ENCODE measurements at regions of chr1 and their contacts with region 1.

Region 1: DNA sequence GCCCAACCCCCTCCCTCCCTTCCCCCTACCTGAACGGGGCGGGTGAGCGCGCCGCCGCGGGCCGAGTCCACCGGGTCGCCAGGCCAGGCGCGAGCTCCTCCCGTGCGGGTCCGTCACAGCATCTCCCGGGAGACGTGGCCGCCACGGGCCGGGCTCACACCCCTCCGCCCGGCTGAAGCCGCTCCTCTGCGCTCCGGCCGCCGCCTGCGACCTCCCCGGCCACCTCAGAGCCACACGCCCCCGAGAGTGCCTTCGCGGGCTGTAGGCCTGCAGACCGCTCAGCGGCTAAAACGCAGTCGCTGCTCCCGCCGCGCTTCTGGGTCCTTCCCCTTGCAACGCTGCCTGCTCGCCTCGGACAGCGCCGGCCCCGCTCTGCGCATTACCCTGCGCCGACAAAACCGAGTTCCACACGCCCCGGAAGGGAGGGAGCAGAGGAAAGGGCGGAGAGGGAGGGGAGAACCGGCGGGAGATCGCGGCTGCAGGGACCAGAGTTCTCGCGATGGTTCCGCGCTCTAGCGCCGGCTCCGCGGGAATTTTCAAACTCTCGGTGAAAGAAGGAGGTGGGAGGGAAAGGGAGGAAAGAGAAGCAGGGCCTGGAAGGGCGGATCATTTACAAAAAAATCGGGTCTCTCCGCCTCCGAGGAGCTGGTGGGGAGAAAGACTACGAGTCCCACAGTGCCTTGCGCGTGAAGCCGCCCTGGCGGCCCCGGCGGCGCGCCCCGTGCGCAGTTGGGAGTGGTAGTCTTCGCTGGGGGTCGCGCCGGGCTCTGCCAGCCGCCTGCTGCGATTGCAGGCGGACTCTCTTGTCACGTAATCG is at the start of gene AHCTF1:
- DNase-seq: peak; percentile 95 to 97 (median 97)
- H3K4me3 ChIP-seq: peak within 1 kb of the TSS; percentile 85 to 93 (median 85)
- H3K4me3 Mint-ChIP-seq: peak within 1 kb of the TSS; percentile 97 to 98
- H3K27ac ChIP-seq: peak within 1 kb of the TSS; percentile 89 to 93
- H3K27ac Mint-ChIP-seq: peak within 1 kb of the TSS; percentile 92 to 98 (median 97)
- H3K4me1 ChIP-seq: peaks cover 16 to 24% of the 10 kb centered on the region in 2 donors
- H3K4me1 Mint-ChIP-seq: peaks cover 23% of the 10 kb centered on the region
- H3K27me3 ChIP-seq: no peaks in the 10 kb centered on the region
- H3K27me3 Mint-ChIP-seq: peaks cover 0 to 7% (median 2%) of the 10 kb centered on the region in 3 donors
- CTCF ChIP-seq: no peak
- polyA plus RNA-seq, gene AHCTF1: 2.4 to 8.8 (median 5.4) TPM

Region 2: DNA sequence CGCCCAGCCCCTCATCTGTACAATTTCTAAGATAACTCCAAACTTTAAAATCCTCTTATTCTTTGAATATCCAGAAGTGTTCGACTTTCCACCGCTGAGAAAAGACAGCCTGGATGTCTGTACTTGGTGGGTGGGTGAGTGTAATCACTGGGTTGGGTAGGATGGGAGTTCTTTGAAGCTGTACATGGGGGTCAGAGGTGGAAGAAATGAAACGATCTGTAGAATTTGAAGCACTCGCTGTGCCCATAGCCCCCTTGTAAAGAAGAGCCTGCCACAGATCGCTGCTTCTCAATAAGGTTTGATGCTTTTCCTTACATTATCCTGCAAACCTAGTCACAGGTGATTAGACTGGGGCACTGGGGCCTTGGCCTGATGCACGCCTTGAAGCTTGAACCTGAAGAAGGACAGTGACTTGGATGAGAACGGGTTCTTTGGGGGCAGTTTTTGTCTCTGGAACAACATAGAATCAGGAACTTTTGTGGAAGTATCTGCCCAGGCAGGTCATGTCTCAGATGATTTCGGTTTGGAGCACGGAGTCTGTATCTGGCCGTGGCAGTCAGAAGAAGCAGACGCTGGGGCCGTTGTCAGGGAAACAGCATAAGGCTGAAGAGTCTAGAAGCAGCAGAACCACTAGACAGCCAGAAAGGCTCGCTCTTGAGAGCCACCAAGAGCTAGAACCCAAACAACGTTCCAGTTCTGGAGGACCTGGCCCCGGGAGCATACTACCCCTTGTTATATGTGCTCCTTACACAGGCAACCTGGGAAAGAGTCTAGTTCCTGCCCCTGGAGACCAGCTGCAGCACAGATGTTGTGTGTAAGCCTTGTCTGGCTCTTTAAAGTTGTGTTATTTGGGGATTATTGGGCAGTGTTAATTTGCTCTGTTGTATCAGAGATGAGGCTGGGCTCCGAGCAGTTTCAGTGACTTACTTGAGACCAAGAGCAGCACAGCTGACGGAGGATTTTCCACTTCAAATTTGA is 252.7 kb before region 1 on chr1:
- intact Hi-C with region 1: no loop called
- DNase-seq: no peak
- H3K4me3 ChIP-seq: no peak overlapping the region
- H3K4me3 Mint-ChIP-seq: no peak overlapping the region
- H3K27ac ChIP-seq: no peak overlapping the region
- H3K27ac Mint-ChIP-seq: no peak overlapping the region
- H3K4me1 ChIP-seq: no peaks in the 10 kb centered on the region
- H3K4me1 Mint-ChIP-seq: peaks cover 3% of the 10 kb centered on the region
- H3K27me3 ChIP-seq: no peaks in the 10 kb centered on the region
- H3K27me3 Mint-ChIP-seq: no peaks in the 10 kb centered on the region
- CTCF ChIP-seq: no peak

Region 3: DNA sequence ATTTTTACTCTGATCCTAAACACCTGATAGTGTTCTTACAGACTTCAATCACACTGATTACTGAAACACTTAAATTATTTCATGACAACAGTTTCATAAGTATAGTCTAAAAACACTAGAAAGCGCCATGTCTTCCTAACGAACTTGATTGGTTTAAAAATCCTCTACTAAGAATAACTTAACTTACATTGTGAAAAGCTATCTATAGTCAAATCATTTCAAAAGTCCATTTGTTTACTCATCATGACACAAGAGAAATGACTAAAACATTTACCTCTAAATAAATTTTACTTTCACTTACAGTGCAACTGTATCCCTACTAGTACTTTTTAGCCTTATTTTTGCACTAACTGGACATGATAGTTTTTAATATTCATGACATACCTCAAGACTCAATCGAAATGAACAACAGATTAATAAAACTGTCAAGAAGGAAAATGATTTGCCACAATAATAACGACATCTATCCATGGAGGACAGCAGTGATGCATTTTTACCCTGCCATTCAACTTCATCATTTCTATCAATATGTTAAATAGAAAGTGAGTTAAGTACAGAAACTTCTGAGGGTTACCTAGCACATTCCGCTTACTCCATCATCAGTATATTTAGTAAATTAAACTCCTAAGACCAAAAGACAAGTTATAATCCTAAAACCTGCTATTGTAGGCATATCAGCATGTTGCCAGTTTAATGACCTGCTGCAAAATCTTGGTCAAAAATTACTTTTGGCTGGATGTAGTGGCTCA is 38.4 kb before region 1 on chr1:
- intact Hi-C with region 1: no loop called
- DNase-seq: no peak
- H3K4me3 ChIP-seq: no peak overlapping the region
- H3K4me3 Mint-ChIP-seq: no peak overlapping the region
- H3K27ac ChIP-seq: no peak overlapping the region
- H3K27ac Mint-ChIP-seq: peak overlapping the region in 2 of 7 donors; percentile 9 to 75
- H3K4me1 ChIP-seq: no peaks in the 10 kb centered on the region
- H3K4me1 Mint-ChIP-seq: no peaks in the 10 kb centered on the region
- H3K27me3 ChIP-seq: no peaks in the 10 kb centered on the region
- H3K27me3 Mint-ChIP-seq: no peaks in the 10 kb centered on the region
- CTCF ChIP-seq: no peak

Region 4: GRCh38 chr1:246959944-246960693 is 28.4 kb after region 1 on chr1:
- intact Hi-C with region 1: loop called in 1 of 2 experiments (anchors 2 kb)
- DNase-seq: peak; percentile 81 to 90 (median 87)
- H3K4me3 ChIP-seq: peak overlapping the region; percentile 13 to 59 (median 33)
- H3K4me3 Mint-ChIP-seq: peak overlapping the region; percentile 28 to 76
- H3K27ac ChIP-seq: peak overlapping the region; percentile 81 to 89
- H3K27ac Mint-ChIP-seq: peak overlapping the region; percentile 94 to 99 (median 97)
- H3K4me1 ChIP-seq: peaks cover 42 to 45% of the 10 kb centered on the region in 2 donors
- H3K4me1 Mint-ChIP-seq: peaks cover 49% of the 10 kb centered on the region
- H3K27me3 ChIP-seq: no peaks in the 10 kb centered on the region
- H3K27me3 Mint-ChIP-seq: peaks cover 0 to 2% (median 0%) of the 10 kb centered on the region in 3 donors
- CTCF ChIP-seq: peak; percentile 19

Region 5: GRCh38 chr1:246971090-246971721 is 39.4 kb after region 1 on chr1:
- intact Hi-C with region 1: loop called (anchors 5 kb)
- DNase-seq: peak; percentile 36 to 50 (median 49)
- H3K4me3 ChIP-seq: no peak overlapping the region
- H3K4me3 Mint-ChIP-seq: peak overlapping the region; percentile 42 to 74
- H3K27ac ChIP-seq: no peak overlapping the region
- H3K27ac Mint-ChIP-seq: peak overlapping the region in 3 of 7 donors; percentile 6 to 67 (median 8)
- H3K4me1 ChIP-seq: no peaks in the 10 kb centered on the region
- H3K4me1 Mint-ChIP-seq: peaks cover 7% of the 10 kb centered on the region
- H3K27me3 ChIP-seq: no peaks in the 10 kb centered on the region
- H3K27me3 Mint-ChIP-seq: peaks cover 0 to 2% (median 0%) of the 10 kb centered on the region in 3 donors
- CTCF ChIP-seq: peak; percentile 86

Region 6: GRCh38 chr1:247007511-247008405 is 76.0 kb after region 1 on chr1 and contains the start of gene ZNF695:
- intact Hi-C with region 1: loop called in 1 of 2 experiments (anchors 10 kb)
- DNase-seq: peak; percentile 79 to 85 (median 84)
- H3K4me3 ChIP-seq: peak within 1 kb of the TSS; percentile 46 to 79 (median 50)
- H3K4me3 Mint-ChIP-seq: peak within 1 kb of the TSS; percentile 99
- H3K27ac ChIP-seq: no peak within 1 kb of the TSS
- H3K27ac Mint-ChIP-seq: peak within 1 kb of the TSS in 6 of 7 donors; percentile 5 to 90 (median 63)
- H3K4me1 ChIP-seq: peaks cover 11 to 19% of the 10 kb centered on the region in 2 donors
- H3K4me1 Mint-ChIP-seq: peaks cover 16% of the 10 kb centered on the region
- H3K27me3 ChIP-seq: peaks cover 0 to 4% of the 10 kb centered on the region in 2 donors
- H3K27me3 Mint-ChIP-seq: peaks cover 19 to 36% (median 26%) of the 10 kb centered on the region in 3 donors
- CTCF ChIP-seq: no peak
- polyA plus RNA-seq, gene ZNF695: 0.18 TPM in 1 of 3 donors, not detected in the others

Region 7: GRCh38 chr1:247078261-247079140 is 146.7 kb after region 1 on chr1 and contains the start of gene ZNF670:
- intact Hi-C with region 1: loop called (anchors 10 kb)
- DNase-seq: peak; percentile 87 to 93 (median 91)
- H3K4me3 ChIP-seq: peak within 1 kb of the TSS; percentile 54 to 84 (median 80)
- H3K4me3 Mint-ChIP-seq: peak within 1 kb of the TSS; percentile 94 to 97
- H3K27ac ChIP-seq: peak within 1 kb of the TSS; percentile 50 to 74
- H3K27ac Mint-ChIP-seq: peak within 1 kb of the TSS; percentile 76 to 88 (median 84)
- H3K4me1 ChIP-seq: peaks cover 16 to 18% of the 10 kb centered on the region in 2 donors
- H3K4me1 Mint-ChIP-seq: peaks cover 28% of the 10 kb centered on the region
- H3K27me3 ChIP-seq: no peaks in the 10 kb centered on the region
- H3K27me3 Mint-ChIP-seq: peaks cover 7 to 10% (median 8%) of the 10 kb centered on the region in 3 donors
- CTCF ChIP-seq: no peak
- polyA plus RNA-seq, gene ZNF670: 0.43 to 1.3 (median 0.44) TPM